ENCODE measurements at regions of chr14 and their contacts with region 1.

Region 1: GRCh38 chr14:94689218-94689984 is 77.2 kb downstream of the SERPINA3 start:
- DNase-seq: peak; percentile 70
- ATAC-seq: peak; percentile 97

Region 2: DNA sequence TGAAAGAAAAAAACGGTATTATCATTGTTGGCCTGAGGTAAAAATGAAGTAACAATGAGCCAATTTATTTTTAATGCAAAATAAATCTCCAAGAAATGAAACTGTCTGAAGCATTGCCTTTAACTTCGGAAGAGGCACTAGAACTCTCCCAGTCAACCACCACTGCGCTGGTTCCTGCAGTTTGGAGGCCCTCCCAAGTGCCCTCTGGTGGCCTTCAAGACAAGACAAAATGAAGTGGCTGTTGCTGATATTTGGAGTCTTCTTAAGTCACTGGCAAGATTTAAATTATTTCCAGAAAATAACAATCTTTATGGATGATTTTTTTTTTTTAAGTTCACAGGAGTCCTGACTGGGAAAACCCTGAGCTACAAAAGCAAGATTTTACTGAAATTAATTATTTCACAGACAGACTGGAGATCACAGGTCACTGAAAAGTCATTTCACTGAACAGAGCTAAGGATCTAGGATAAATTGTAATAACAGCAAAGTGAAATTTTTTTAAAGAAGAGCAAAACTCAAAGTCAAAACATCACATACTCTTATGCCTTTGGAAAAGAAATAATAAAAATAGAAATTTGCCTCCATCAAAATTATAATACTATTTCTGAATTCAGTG is 409.7 kb after region 1 on chr14:
- intact Hi-C with region 1: loop called (anchors 5 kb)
- DNase-seq: peak; percentile 78
- ATAC-seq: peak; percentile 77

Region 3: DNA sequence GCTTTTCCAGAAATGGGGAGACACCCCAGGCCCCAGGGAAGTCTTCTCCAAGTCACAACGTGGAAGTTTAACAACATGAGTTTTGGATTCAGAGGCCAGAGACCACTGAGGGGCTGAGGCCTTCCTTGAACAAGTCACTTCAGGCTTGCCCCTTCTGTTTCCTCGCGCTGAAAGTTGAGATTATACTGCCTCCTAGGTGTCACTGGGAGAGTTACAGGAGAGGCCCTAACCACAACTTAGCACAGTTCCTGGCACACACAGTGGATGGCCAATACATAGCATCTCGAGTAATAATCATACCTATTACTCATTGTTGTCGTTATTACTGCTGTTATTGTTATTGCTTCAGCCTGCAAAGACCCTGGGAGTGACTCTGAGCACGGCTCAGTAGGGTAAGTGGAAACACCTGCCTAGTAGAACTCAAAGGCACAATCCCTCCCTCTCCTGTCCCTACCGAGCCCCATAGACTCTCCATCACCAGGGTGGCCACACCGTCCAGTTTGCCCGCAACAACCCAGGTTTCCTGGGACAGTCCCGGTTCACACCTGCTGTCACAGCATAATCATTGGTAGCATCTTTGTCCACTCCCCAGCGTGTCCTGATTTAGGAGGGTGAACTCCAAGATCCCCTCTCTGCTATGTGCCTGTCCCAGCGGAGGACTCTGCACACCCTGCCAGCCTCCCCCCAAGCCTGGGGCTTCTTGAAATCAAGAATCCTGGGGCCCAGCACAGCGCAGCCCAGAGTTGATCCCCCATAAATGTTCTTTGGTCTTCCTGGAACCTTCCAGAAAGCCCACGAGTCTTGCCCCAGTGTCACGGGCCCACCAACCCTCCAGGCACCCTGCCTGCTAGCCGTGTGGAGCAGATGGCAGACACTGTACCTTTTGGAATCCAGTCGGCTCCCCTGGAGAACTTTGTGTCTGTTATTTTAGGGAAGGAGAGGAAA is 742.1 kb after region 1 on chr14:
- intact Hi-C with region 1: loop called (anchors 2 kb)
- DNase-seq: no peak
- ATAC-seq: peak; percentile 62

Measured in Right ventricle myocardium superior (tissue), 1 donor.